ENCODE measurements at regions of chr3 and their contacts with region 1.

Region 1: GRCh38 chr3:84547971-84548970 is 410.5 kb upstream of the CADM2 start:
- DNase-seq: peak; percentile 43
- H3K4me3 ChIP-seq: peak overlapping the region; percentile 37 to 54
- H3K27ac ChIP-seq: peak overlapping the region in 1 of 2 experiments; percentile 22; a peak in 1 of 4 replicates
- H3K4me1 ChIP-seq: peaks cover 0 to 6% of the 10 kb centered on the region in 2 experiments; a peak in 1 of 4 replicates
- H3K27me3 ChIP-seq: no peaks in the 10 kb centered on the region
- CTCF ChIP-seq: peak; percentile 67
- EP300 ChIP-seq: no peak
- RAD21 ChIP-seq: peak; percentile 75

Region 2: DNA sequence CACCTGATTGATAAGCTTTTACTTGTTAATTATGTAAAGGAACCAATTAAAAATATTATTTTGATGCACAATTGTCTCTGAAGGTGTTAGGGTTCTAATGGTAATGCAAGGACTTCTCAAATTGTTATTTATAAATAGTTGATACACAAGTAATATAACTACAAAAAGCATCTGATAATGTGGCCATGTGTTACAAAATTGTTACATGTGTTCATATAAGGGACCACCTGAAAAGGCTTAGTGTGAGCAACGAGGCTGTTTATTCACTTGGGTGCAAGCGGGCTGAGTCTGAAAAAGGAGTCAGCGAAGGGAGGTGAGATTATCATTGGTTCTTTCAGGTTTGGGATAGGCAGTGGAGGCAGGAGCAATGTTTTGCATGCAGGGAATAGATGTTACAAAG is 11.4 kb before region 1 on chr3:
- CTCF ChIA-PET with region 1: interaction called, 19 read pairs
- POLR2A ChIA-PET with region 1: no interaction called
- DNase-seq: no peak
- H3K4me3 ChIP-seq: no peak overlapping the region
- H3K27ac ChIP-seq: no peak overlapping the region
- H3K4me1 ChIP-seq: no peaks in the 10 kb centered on the region
- H3K27me3 ChIP-seq: no peaks in the 10 kb centered on the region
- CTCF ChIP-seq: no peak
- EP300 ChIP-seq: no peak
- RAD21 ChIP-seq: no peak

Region 3: GRCh38 chr3:84925571-84925970 is 377.3 kb after region 1 on chr3:
- CTCF ChIA-PET with region 1: no interaction called
- POLR2A ChIA-PET with region 1: no interaction called
- DNase-seq: no peak
- H3K4me3 ChIP-seq: no peak overlapping the region
- H3K27ac ChIP-seq: no peak overlapping the region
- H3K4me1 ChIP-seq: no peaks in the 10 kb centered on the region
- H3K27me3 ChIP-seq: no peaks in the 10 kb centered on the region
- CTCF ChIP-seq: no peak
- EP300 ChIP-seq: no peak
- RAD21 ChIP-seq: no peak

Region 4: GRCh38 chr3:84965141-84965540 is 416.9 kb after region 1 on chr3:
- CTCF ChIA-PET with region 1: interaction called, 11 read pairs
- POLR2A ChIA-PET with region 1: no interaction called
- DNase-seq: peak; percentile 63
- H3K4me3 ChIP-seq: no peak overlapping the region
- H3K27ac ChIP-seq: peak overlapping the region in 1 of 2 experiments; percentile 50; a peak in 2 of 4 replicates
- H3K4me1 ChIP-seq: peaks cover 2 to 6% of the 10 kb centered on the region in 2 experiments; a peak in 2 of 4 replicates
- H3K27me3 ChIP-seq: peaks cover 18% of the 10 kb centered on the region
- CTCF ChIP-seq: peak; percentile 36; the same call in 1 of the 2 replicates
- EP300 ChIP-seq: no peak
- RAD21 ChIP-seq: peak; percentile 57

Region 5: DNA sequence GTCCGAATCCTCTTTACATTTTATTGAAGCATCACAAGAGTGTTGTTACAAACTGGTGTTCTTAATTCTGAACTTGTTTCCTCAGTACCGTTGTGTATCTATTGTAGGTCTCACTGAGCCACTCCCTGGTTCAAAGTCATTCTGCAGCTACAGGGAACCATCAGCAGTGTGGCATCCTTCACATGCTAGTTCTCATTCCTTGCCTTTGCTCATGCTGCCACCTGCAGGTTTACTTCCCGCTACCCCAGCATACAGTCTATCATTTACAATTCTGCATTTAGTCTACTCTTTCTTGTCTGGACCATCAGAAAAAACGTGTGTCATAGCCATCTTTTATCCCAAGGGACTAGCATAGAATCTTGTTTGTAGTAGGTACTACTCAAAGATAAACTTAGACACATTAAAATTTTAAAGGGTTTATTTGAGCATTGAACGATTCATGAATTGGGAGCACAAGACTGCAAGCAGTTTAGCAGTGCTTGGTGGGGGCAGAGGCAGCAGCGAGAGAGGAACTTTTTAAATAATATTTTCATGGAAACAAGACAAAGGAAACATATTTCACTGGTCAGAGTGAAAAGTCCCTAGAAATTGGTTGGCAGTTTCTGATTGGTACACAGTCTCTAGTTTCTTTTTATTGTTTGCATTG is 812.6 kb after region 1 on chr3:
- CTCF ChIA-PET with region 1: interaction called, 35 read pairs
- POLR2A ChIA-PET with region 1: no interaction called
- DNase-seq: peak; percentile 44
- H3K4me3 ChIP-seq: no peak overlapping the region
- H3K27ac ChIP-seq: no peak overlapping the region
- H3K4me1 ChIP-seq: no peaks in the 10 kb centered on the region
- H3K27me3 ChIP-seq: no peaks in the 10 kb centered on the region
- CTCF ChIP-seq: peak; percentile 64
- EP300 ChIP-seq: no peak
- RAD21 ChIP-seq: peak; percentile 88

Region 6: DNA sequence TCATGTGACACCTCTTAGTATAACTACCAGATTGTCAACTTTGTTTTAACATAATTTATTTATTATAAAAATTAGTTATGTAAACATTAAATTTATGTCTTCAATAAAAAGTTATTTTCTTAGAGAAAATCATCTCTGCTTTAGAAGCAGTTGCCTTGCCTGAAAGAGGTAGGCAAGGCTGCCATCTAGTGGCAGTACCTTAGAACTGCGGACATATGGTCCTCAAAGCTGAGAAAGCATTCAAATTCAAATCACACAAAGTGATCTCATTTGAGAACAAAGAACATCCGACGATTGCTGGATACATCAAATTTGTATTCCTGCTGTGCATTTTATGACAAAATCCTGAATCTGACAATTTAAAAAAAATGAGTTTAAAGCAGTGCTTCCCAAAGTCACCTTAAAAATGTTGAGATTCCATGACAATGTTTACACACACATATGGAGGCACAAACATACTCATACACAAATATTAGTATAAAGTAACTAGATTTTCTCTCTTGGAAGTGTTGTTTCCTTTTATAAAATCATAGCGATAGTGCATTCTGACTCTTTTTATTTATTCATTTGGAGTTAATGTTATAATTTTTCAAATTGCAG is 1027.9 kb after region 1 on chr3:
- CTCF ChIA-PET with region 1: interaction called, 20 read pairs
- POLR2A ChIA-PET with region 1: no interaction called
- DNase-seq: peak; percentile 32
- H3K4me3 ChIP-seq: no peak overlapping the region; a peak in 1 of 4 replicates
- H3K27ac ChIP-seq: no peak overlapping the region
- H3K4me1 ChIP-seq: no peaks in the 10 kb centered on the region
- H3K27me3 ChIP-seq: no peaks in the 10 kb centered on the region
- CTCF ChIP-seq: peak; percentile 87
- EP300 ChIP-seq: no peak
- RAD21 ChIP-seq: peak; percentile 87

Measured in SK-N-SH (cell line).